ENCODE measurements at regions of chr5 and their contacts with region 1.

Region 1: DNA sequence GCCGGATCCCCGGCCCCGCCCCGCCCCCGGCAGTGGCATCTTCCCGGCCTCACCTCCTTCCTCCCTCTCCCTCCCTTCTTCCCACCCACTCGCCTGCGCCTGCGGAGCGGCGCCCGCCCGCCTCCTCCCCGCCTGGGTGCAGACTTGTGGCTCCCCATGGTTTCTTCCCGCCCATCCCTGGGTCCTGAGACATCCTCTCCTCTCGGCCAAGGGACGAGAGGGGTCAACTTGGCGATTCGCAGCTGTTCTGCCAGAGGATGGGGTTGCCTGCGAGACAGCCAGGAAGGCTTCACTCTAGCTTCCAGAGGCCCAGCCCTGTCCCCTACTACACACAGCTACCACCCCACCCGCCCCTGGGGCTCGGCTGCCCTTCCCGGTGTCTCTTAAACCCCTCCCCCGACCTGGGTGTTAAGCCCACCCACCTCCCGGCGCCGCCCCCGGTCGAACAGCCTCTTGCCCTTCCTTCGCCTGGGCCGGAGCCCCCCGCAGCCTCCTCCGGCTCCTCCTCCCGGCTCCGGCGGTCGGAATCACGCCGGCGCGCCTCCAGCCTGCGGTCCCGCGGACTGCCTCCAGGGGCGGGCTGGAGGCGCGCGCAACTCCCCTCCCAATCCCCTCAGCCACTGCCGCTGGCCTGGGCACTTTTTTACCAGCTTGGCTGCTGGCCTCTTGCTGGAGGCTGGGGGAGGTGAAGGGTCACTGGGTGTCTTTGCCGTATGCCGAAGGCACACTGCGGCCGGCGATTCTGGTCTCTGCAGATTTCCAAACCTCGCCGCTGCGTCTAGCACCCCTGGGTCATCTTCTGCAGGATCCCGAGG is 1.9 kb downstream of the JADE2 start:
- DNase-seq: peak; percentile 88 to 92
- H3K4me3 ChIP-seq: peak overlapping the region; percentile 62 to 80
- H3K27ac ChIP-seq: peak overlapping the region; percentile 93 to 97
- H3K4me1 ChIP-seq: peaks cover 0 to 4% of the 10 kb centered on the region in 2 donors
- H3K27me3 ChIP-seq: no peaks in the 10 kb centered on the region
- CTCF ChIP-seq: peak; percentile 93 to 99 (median 96)
- POLR2A ChIP-seq: peak in 1 of 2 donors; percentile 50

Region 2: DNA sequence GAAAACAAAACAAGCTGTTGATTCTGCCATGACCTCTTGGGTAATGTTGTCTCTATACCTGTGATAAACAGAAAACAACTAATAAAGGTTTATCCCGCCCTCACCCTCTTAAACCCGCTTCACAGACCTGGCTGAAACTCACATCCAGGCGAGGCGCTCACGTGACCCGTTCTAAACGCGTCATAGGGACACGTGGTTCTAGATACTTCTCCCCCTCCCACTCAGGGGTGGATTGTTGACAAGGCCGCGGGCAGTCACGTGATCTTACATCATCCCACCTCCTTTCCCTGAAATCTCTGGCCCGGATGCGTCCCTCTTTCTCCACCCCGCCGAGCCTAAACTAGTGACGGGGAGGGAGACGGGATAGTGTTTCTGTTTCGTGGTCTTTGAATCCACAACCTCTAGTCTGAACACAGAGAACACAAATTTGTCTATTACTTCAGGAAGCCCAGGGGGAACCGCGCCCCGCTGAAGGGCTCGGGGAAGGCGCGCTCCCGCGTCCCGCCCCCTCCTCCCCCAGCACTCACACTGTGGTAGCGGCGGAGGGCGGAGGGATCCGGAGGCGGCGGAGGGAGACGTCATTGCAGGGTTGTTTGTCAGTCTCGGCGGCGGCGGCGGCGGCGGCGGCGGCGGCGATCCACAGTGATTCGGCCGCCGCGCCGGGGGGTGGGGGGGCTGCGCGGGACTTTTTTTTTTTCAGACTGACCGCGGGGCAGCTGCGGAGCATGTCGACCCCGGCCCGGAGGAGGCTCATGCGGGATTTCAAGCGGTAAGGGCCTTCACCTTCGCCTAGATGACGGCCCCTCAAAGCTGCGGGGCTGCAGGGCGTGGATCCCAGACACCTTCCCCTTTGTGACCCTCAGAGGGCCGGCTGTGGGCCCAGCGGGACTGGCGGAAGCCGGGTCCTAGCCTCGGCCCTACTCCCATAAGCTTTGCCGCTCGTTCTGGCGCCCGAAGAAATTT is 156.2 kb before region 1 on chr5 and contains the start of gene UBE2B:
- intact Hi-C with region 1: loop called (anchors 5 kb)
- DNase-seq: peak; percentile 96 to 100
- H3K4me3 ChIP-seq: peak within 1 kb of the TSS; percentile 77 to 89
- H3K27ac ChIP-seq: peak within 1 kb of the TSS; percentile 96 to 99
- H3K4me1 ChIP-seq: peaks cover 0 to 1% of the 10 kb centered on the region in 2 donors
- H3K27me3 ChIP-seq: no peaks in the 10 kb centered on the region
- CTCF ChIP-seq: peak in 2 of 4 experiments; percentile 19 to 25
- POLR2A ChIP-seq: peak; percentile 73 to 91
- total RNA-seq, gene UBE2B: 44.5 to 109 (median 65.5) TPM

Region 3: DNA sequence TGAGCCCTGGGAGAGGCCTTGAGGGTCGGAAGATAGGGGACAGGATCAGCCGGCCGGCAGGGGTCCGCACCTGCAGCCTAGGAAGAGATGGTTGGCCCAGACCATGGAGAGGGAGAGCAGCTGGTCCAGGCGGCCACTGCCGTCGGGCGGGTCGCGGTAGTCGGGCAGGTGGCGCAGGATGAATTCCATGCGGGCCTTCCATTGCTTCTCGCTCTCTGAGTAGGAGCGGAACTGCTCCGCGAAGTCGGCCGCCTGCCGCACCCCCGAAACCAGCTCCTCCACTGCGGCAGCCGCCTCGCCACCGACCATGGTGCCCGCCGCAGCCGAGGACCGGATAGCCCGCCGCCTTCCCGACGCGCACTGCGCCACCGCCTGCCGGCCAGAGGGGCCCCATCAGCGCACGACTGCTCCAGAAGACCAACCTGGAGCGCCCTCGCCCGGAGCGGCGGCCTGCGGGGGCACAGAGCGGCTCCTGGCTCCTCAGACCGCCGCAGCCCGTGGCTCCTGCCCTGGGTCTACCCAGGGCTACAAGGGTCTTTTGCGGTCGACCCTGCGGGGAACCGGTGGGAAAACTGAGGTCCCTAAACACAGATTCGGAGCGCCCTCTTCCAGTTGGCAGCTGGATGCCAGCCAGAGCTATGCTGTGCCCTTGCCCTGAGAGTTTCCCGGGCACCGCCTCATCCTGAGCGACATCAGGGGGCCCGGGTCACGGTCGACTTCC is 115.6 kb before region 1 on chr5 and contains the start of gene CDKN2AIPNL:
- intact Hi-C with region 1: loop called (anchors 5 kb)
- DNase-seq: peak; percentile 88 to 91
- H3K4me3 ChIP-seq: peak within 1 kb of the TSS; percentile 68 to 80
- H3K27ac ChIP-seq: peak within 1 kb of the TSS; percentile 83 to 90
- H3K4me1 ChIP-seq: peaks cover 0 to 4% of the 10 kb centered on the region in 2 donors
- H3K27me3 ChIP-seq: no peaks in the 10 kb centered on the region
- CTCF ChIP-seq: peak; percentile 93 to 97 (median 94)
- POLR2A ChIP-seq: peak; percentile 2 to 66
- total RNA-seq, gene CDKN2AIPNL: 20.9 to 26.1 (median 24.5) TPM in 3 of 4 donors, not detected in the other

Region 4: GRCh38 chr5:134465816-134466240 is 61.5 kb before region 1 on chr5:
- intact Hi-C with region 1: loop called (anchors 2 kb)
- DNase-seq: peak; percentile 90 to 93
- H3K4me3 ChIP-seq: peak overlapping the region; percentile 40 to 43
- H3K27ac ChIP-seq: peak overlapping the region; percentile 92
- H3K4me1 ChIP-seq: no peaks in the 10 kb centered on the region
- H3K27me3 ChIP-seq: no peaks in the 10 kb centered on the region
- CTCF ChIP-seq: peak in 2 of 4 experiments; percentile 3 to 20
- POLR2A ChIP-seq: peak; percentile 62 to 69